Activated CD8-positive, alpha-beta memory T cell treated with anti-CD3 and anti-CD28 coated beads, Interleukin-2, amount 10 ng/mL, durations not matched to agents 7 days and 5 days (primary cell): ENCODE measurements at regions of chr6 and their contacts with region 1.

Region 1: DNA sequence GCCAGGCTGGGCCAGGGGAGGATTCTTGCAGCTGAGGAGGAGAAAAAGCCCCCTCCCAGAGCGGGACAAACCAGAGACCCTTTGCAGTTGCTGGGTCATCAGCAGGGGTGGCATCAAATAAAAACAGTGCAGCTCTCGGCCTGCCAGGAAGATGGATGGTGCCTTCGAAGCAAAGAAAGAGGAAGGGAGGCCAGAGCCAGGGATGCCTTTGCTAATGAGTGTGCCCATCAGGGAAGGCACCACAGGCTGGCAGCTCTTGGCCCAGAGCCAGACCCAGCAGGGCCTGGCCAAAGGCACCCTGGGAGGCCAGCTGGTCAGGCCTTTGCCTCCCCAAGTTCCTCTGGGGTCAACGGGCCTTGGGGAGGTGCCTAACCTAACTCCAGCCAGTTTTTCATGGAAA is 26.3 kb upstream of the ZNF318 start:
- DNase-seq: no peak
- ATAC-seq: no peak
- H3K4me3 Mint-ChIP-seq: no peak overlapping the region
- H3K27ac Mint-ChIP-seq: no peak overlapping the region
- H3K4me1 Mint-ChIP-seq: peaks cover 14% of the 10 kb centered on the region
- H3K27me3 Mint-ChIP-seq: peaks cover 41% of the 10 kb centered on the region

Region 2: GRCh38 chr6:43269273-43270007 is 126.3 kb before region 1 on chr6:
- CTCF ChIA-PET with region 1: interaction called, 24 read pairs
- DNase-seq: peak; percentile 53
- ATAC-seq: peak; percentile 72
- H3K4me3 Mint-ChIP-seq: peak overlapping the region; percentile 25
- H3K27ac Mint-ChIP-seq: no peak overlapping the region
- H3K4me1 Mint-ChIP-seq: peaks cover 14% of the 10 kb centered on the region
- H3K27me3 Mint-ChIP-seq: peaks cover 44% of the 10 kb centered on the region